Posterior vena cava (tissue), 2 donors: ENCODE measurements at regions of chr11 and their contacts with region 1.

Region 1: GRCh38 chr11:102109896-102110760 is at the start of gene YAP1:
- DNase-seq: peak; percentile 97
- total RNA-seq, gene YAP1: 203 to 281 TPM

Region 2: DNA sequence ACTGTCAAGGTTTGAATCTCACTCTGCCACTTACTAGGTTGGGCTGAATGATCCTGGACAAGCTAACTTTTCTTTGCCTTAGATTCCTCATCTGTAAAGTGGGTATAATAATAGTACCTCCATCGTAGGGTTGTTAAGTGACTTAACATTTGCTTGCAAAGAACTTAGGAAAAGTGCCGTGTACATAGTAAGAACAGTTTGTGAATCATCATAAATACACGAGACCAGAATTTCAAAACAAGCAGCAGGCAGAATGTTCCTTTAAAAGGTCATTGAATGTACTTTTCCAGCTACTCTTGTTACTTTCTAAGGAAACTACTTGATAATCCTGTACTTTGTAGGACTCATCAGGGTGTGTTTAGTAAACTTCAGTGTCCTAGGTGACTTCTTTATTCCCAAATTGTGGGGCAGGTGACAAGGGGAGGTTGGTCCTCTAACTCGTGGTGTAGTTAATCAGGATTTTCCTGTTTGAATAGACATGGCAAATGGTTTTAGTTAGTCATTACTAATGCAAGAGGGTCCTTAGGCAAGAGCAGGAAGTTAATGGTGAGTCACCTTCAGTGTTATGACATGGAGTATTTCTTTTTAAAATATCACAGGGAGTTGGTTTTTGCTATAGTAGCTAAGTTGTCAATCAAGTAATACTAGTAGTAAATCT is 68.0 kb after region 1 on chr11:
- intact Hi-C with region 1: loop called in 1 of 2 experiments (anchors 10 kb)
- DNase-seq: no peak

Region 3: GRCh38 chr11:102225689-102226568 is 115.8 kb after region 1 on chr11:
- intact Hi-C with region 1: loop called in 1 of 2 experiments (anchors 5 kb)
- DNase-seq: no peak

Region 4: DNA sequence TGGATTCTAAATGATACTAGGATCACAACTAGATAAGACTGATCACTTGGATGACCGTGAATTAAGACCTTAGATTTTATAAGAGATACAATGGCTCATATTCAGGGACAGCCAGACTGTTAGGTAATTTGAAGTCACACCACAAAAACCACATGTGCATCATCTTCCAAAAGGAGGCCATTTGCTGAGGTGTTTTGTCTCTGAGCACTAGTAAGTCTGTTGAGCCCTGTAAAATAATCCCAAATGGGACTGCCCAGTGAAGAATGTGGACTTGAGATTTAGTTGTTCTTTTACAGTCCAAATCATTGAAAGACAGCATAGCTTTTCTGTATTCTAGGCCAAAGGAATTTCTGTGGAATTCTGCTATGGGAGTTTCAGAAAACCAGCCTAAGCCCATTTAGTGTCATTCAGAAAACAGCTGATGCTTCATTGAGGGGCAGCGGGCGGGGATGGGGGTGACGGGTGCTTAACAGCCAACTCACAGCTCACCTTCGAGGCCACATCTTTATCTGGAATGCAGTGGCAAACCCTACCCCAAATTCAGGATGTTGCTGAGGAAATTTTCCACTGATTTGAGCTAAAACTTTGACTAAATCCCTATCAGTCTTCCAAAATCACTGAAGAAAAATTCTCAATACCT is 127.1 kb after region 1 on chr11:
- intact Hi-C with region 1: no loop called
- DNase-seq: no peak

Region 5: DNA sequence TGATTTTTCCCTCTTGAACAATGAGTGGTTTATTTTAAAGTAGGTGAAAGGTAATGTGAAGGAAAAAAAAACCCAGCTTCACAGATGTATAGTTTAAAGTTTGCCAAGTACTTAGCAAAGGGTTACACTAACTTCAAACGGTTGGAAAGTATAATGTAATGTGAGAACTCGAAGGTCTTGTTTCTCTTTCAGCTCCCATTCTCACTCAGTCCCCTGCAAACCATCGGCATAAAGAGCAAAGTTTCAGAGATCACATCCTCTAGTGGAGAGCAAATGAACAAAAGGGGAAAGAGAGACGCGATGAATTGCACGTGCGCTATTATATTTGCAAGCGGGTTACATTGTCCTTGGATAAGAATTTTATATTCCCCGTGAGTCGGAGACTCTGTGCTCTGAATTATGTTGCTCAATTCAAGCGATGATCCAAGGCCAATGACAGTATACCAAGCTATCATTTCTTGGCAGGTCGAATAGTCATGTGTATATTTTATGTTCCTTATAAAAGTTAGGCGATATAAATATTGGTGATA is 169.6 kb after region 1 on chr11:
- intact Hi-C with region 1: loop called in 1 of 2 experiments (anchors 10 kb)
- DNase-seq: no peak